Activated CD8-positive, alpha-beta T cell treated with anti-CD3 and anti-CD28 coated beads for 36 hours (primary cell): ENCODE measurements at regions of chr17 and their contacts with region 1.

Region 1: DNA sequence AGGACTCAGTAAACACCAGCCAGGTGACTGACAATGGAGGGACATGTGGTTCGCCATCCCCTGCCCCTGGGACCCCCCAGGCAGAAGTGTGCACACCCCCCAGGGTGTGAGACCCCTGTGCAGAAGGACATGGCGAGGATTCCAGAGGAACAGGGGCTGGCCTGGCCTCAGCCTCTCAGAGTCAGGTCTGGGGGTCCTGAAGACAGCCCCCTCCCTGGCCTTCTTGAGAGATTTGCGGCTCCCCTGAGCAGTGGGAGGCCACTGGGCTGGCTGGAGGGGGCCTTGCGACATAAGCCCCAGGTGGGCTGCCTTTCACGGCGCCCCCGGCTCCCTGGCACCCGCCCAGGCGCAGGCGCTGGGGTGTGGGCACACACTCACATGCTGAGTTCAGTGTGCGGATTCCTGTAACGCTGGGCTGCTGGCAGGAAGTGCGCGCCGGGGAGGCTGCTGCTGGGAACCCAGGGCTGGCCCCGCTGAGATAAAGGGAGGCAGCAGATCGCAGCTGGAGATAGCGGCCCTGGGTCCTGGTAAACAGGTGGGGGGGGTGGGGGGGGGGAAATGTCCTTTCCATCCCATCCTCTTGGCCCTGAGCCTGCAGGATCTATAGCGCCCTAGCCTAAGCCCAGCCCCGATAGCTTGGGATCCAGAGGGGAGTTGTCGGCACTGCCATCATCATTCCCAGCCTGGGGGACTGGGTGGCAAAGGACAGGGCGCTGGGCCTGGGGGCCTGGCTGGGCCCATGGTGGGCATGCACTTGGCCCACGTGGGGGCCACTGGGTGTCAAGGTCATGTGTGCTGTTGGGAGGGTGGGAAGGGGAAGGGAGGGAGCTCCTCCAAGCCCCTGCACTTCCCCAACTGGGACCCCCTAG is 27.1 kb downstream of the TMEM235 start:
- DNase-seq: peak; percentile 80
- ATAC-seq: peak; percentile 61
- H3K4me3 Mint-ChIP-seq: peak overlapping the region; percentile 56
- H3K27ac Mint-ChIP-seq: peak overlapping the region; percentile 71
- H3K4me1 Mint-ChIP-seq: peaks cover 34% of the 10 kb centered on the region
- H3K27me3 Mint-ChIP-seq: no peaks in the 10 kb centered on the region
- CTCF ChIP-seq: no peak

Region 2: DNA sequence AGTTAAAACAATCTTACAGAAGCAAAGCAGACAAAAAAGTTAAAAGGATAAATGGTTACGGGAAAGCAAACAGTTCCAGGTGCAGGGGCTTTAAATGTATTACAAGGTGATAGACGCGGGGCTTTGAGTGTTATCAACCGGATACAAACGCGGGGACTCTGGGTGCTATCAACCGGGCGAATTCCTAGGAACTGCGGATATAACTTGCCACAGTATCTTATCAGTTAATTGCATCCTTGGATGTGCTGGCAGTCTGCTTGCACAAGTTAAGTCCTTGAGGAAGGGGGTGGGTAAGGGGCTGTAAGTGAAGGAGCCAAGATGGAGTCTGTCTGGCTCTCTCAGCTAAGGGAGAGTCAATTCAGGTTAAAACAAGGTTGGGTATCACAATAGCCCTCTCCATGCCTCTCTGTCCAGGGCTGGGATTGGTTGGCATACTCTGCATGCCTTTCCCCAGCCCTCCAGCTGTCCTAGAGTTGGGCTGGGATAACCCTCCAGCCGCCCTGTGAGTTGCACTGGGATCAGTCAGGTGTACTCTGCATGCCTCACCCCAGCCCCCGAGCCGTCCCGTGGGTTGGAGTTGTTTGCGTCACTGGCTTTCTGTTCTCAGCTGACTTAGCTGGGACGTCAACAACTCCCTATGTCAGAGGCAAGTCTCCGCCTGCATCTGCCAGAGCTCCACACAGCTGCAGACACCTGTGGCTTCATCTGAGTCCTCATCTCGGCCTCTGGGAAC is 13.8 kb after region 1 on chr17:
- CTCF ChIA-PET with region 1: interaction called, 6 read pairs
- POLR2A ChIA-PET with region 1: interaction called, 10 read pairs
- intact Hi-C with region 1: no loop called
- DNase-seq: peak; percentile 82
- ATAC-seq: peak; percentile 92
- H3K4me3 Mint-ChIP-seq: peak overlapping the region; percentile 35
- H3K27ac Mint-ChIP-seq: peak overlapping the region; percentile 36
- H3K4me1 Mint-ChIP-seq: peaks cover 24% of the 10 kb centered on the region
- H3K27me3 Mint-ChIP-seq: no peaks in the 10 kb centered on the region
- CTCF ChIP-seq: no peak